K562 (cell line): ENCODE measurements at regions of chr6 and their contacts with region 1.

Region 1: GRCh38 chr6:147588469-147588868 is 80.0 kb downstream of the SAMD5 start:
- DNase-seq: no peak
- ATAC-seq: no peak
- H3K4me3 ChIP-seq: no peak overlapping the region
- H3K27ac ChIP-seq: no peak overlapping the region
- H3K4me1 ChIP-seq: no peaks in the 10 kb centered on the region
- H3K27me3 ChIP-seq: peaks cover 40 to 45% of the 10 kb centered on the region in 2 experiments
- CTCF ChIP-seq: no peak
- EP300 ChIP-seq: no peak
- POLR2A ChIP-seq: no peak
- RAD21 ChIP-seq: no peak

Region 2: GRCh38 chr6:146602526-146602925 is 985.9 kb before region 1 on chr6:
- CTCF ChIA-PET with region 1: no interaction called
- POLR2A ChIA-PET with region 1: no interaction called
- in situ Hi-C with region 1: no loop called
- intact Hi-C with region 1: no loop called
- DNase-seq: no peak
- ATAC-seq: no peak
- H3K4me3 ChIP-seq: no peak overlapping the region
- H3K27ac ChIP-seq: no peak overlapping the region
- H3K4me1 ChIP-seq: peaks cover 0 to 7% of the 10 kb centered on the region in 2 experiments; a peak in 3 of 5 replicates
- H3K27me3 ChIP-seq: peaks cover 0 to 8% of the 10 kb centered on the region in 2 experiments; a peak in 1 of 5 replicates
- CTCF ChIP-seq: no peak
- EP300 ChIP-seq: no peak
- POLR2A ChIP-seq: no peak
- RAD21 ChIP-seq: no peak

Region 3: GRCh38 chr6:147604373-147604772 is 15.9 kb after region 1 on chr6:
- CTCF ChIA-PET with region 1: no interaction called
- POLR2A ChIA-PET with region 1: interaction called, 10 read pairs
- in situ Hi-C with region 1: no loop called
- intact Hi-C with region 1: no loop called
- DNase-seq: no peak
- ATAC-seq: no peak
- H3K4me3 ChIP-seq: no peak overlapping the region
- H3K27ac ChIP-seq: no peak overlapping the region
- H3K4me1 ChIP-seq: no peaks in the 10 kb centered on the region
- H3K27me3 ChIP-seq: peaks cover 7 to 10% of the 10 kb centered on the region in 2 experiments
- CTCF ChIP-seq: no peak
- EP300 ChIP-seq: no peak
- POLR2A ChIP-seq: no peak
- RAD21 ChIP-seq: no peak

Region 4: DNA sequence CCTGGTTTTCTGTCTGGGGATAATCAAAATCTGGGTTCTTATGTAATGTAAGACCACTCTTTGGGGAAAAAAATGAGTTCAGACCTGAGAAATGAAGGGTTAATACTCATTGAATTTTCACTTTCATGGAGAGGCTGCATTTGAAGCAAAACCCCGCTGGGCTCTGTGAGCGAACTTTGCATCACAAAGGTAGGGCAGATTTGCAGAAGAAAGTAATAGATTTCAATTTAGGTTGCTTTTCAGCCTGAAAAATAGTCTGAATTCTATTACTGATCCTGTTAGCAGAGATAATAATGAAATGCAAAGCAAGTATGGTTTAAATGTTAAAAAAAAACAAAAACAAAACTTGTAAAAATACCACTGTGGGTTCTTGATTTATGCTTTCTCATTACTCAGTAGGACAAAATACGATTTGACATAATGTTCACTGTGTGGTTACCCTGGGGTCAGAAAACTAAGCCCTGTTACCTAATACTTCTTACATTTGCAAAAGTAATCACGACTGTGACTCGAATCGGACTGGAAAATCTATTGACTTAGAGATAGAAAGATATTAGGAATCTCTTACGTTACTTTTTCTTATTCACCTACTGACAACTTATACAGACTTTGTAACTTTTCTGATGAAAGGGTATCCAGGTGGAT is 1230.6 kb after region 1 on chr6:
- CTCF ChIA-PET with region 1: no interaction called
- POLR2A ChIA-PET with region 1: no interaction called
- in situ Hi-C with region 1: no loop called
- intact Hi-C with region 1: no loop called
- DNase-seq: no peak
- ATAC-seq: no peak
- H3K4me3 ChIP-seq: no peak overlapping the region
- H3K27ac ChIP-seq: no peak overlapping the region
- H3K4me1 ChIP-seq: no peaks in the 10 kb centered on the region
- H3K27me3 ChIP-seq: no peaks in the 10 kb centered on the region
- CTCF ChIP-seq: no peak
- EP300 ChIP-seq: no peak
- POLR2A ChIP-seq: no peak
- RAD21 ChIP-seq: no peak